H1 (cell line): ENCODE measurements at regions of chr4 and their contacts with region 1.

Region 1: DNA sequence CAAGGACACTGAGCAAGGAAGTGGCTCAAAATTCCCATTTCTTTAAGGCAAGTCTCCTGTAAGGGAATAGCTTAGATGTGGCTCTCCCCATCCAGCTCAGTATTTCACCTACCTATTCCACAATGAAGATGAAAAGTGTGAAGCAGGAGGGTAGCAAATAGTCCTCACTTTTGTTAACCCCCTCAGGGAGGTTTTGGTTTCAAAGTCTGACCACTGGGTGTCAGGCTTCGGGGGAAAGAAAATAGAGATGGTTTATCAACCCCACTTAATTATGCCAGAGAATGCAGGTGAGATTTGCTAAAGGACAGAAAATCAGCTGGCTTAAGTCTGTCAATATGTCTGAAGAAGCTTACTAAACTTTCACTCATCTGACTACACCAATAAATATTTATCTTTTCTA is 69.6 kb downstream of the DHX15 start:
- DNase-seq: no peak
- H3K4me3 ChIP-seq: no peak overlapping the region
- H3K27ac ChIP-seq: no peak overlapping the region
- H3K4me1 ChIP-seq: peaks cover 9 to 17% (median 14%) of the 10 kb centered on the region in 4 experiments; a peak in 6 of 7 replicates
- H3K27me3 ChIP-seq: no peaks in the 10 kb centered on the region
- CTCF ChIP-seq: peak in 2 of 3 experiments; percentile 40 to 48; a peak in 3 of 4 replicates
- EP300 ChIP-seq: no peak
- POLR2A ChIP-seq: no peak; a peak in 1 of 3 replicates
- RAD21 ChIP-seq: peak; percentile 34 to 40; a peak in 3 of 4 replicates

Region 2: GRCh38 chr4:24453951-24454350 is 60.9 kb before region 1 on chr4:
- CTCF ChIA-PET with region 1: no interaction called
- POLR2A ChIA-PET with region 1: no interaction called
- DNase-seq: no peak
- H3K4me3 ChIP-seq: no peak overlapping the region
- H3K27ac ChIP-seq: no peak overlapping the region
- H3K4me1 ChIP-seq: no peaks in the 10 kb centered on the region; a peak in 1 of 7 replicates
- H3K27me3 ChIP-seq: no peaks in the 10 kb centered on the region; a peak in 1 of 7 replicates
- CTCF ChIP-seq: no peak
- EP300 ChIP-seq: no peak
- POLR2A ChIP-seq: no peak
- RAD21 ChIP-seq: no peak

Region 3: GRCh38 chr4:24488399-24489164 is 26.2 kb before region 1 on chr4:
- CTCF ChIA-PET with region 1: interaction called, 35 read pairs
- POLR2A ChIA-PET with region 1: interaction called, 21 read pairs
- DNase-seq: peak in 1 of 2 experiments; percentile 98
- H3K4me3 ChIP-seq: no peak overlapping the region
- H3K27ac ChIP-seq: no peak overlapping the region
- H3K4me1 ChIP-seq: peaks cover 0 to 3% (median 0%) of the 10 kb centered on the region in 4 experiments; a peak in 3 of 7 replicates
- H3K27me3 ChIP-seq: peaks cover 0 to 1% (median 0%) of the 10 kb centered on the region in 4 experiments; a peak in 1 of 7 replicates
- CTCF ChIP-seq: peak; percentile 86 to 97 (median 96)
- EP300 ChIP-seq: no peak
- POLR2A ChIP-seq: no peak
- RAD21 ChIP-seq: peak; percentile 89 to 91

Region 4: GRCh38 chr4:24497221-24497620 is 17.6 kb before region 1 on chr4:
- CTCF ChIA-PET with region 1: interaction called, 5 read pairs
- POLR2A ChIA-PET with region 1: interaction called, 13 read pairs
- DNase-seq: no peak
- H3K4me3 ChIP-seq: no peak overlapping the region
- H3K27ac ChIP-seq: no peak overlapping the region
- H3K4me1 ChIP-seq: peaks cover 0 to 6% (median 2%) of the 10 kb centered on the region in 4 experiments; a peak in 4 of 7 replicates
- H3K27me3 ChIP-seq: no peaks in the 10 kb centered on the region
- CTCF ChIP-seq: no peak
- EP300 ChIP-seq: no peak
- POLR2A ChIP-seq: no peak
- RAD21 ChIP-seq: no peak

Region 5: DNA sequence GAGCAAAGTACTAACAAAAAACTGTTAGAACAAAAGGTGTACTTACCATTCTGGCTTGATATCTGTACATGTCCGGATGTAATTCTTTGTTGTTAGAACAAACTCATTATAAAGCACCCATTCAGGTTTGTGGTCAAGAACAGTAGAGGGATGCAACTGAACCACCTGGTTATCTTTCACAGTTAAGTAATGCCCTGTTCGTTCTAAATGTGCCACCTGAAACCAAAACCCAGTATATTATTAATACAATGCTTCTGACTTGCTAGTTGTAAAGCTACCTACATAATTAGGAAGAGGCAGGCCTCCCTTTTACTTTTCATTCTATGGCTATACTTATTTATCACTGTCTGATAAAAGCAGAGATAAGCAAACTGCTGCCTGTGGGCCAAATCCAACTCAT is 14.8 kb after region 1 on chr4:
- CTCF ChIA-PET with region 1: interaction called, 10 read pairs
- POLR2A ChIA-PET with region 1: interaction called, 73 read pairs
- DNase-seq: no peak
- H3K4me3 ChIP-seq: no peak overlapping the region
- H3K27ac ChIP-seq: no peak overlapping the region
- H3K4me1 ChIP-seq: no peaks in the 10 kb centered on the region
- H3K27me3 ChIP-seq: no peaks in the 10 kb centered on the region
- CTCF ChIP-seq: no peak
- EP300 ChIP-seq: no peak
- POLR2A ChIP-seq: no peak
- RAD21 ChIP-seq: no peak

Region 6: GRCh38 chr4:24668956-24669355 is 154.2 kb after region 1 on chr4:
- CTCF ChIA-PET with region 1: no interaction called
- POLR2A ChIA-PET with region 1: no interaction called
- DNase-seq: no peak
- H3K4me3 ChIP-seq: no peak overlapping the region
- H3K27ac ChIP-seq: no peak overlapping the region
- H3K4me1 ChIP-seq: peaks cover 0 to 2% (median 0%) of the 10 kb centered on the region in 4 experiments; a peak in 2 of 7 replicates
- H3K27me3 ChIP-seq: no peaks in the 10 kb centered on the region
- CTCF ChIP-seq: no peak
- EP300 ChIP-seq: no peak
- POLR2A ChIP-seq: no peak
- RAD21 ChIP-seq: no peak

Region 7: GRCh38 chr4:24783506-24783905 is 268.7 kb after region 1 on chr4:
- CTCF ChIA-PET with region 1: no interaction called
- POLR2A ChIA-PET with region 1: no interaction called
- DNase-seq: no peak
- H3K4me3 ChIP-seq: no peak overlapping the region
- H3K27ac ChIP-seq: no peak overlapping the region
- H3K4me1 ChIP-seq: peaks cover 0 to 3% (median 0%) of the 10 kb centered on the region in 4 experiments; a peak in 1 of 7 replicates
- H3K27me3 ChIP-seq: peaks cover 0 to 2% (median 0%) of the 10 kb centered on the region in 4 experiments; a peak in 1 of 7 replicates
- CTCF ChIP-seq: no peak
- EP300 ChIP-seq: no peak
- POLR2A ChIP-seq: no peak
- RAD21 ChIP-seq: no peak

Region 8: GRCh38 chr4:24949970-24950369 is 435.2 kb after region 1 on chr4:
- CTCF ChIA-PET with region 1: no interaction called
- POLR2A ChIA-PET with region 1: no interaction called
- DNase-seq: no peak
- H3K4me3 ChIP-seq: no peak overlapping the region
- H3K27ac ChIP-seq: no peak overlapping the region
- H3K4me1 ChIP-seq: no peaks in the 10 kb centered on the region
- H3K27me3 ChIP-seq: no peaks in the 10 kb centered on the region
- CTCF ChIP-seq: no peak
- EP300 ChIP-seq: no peak
- POLR2A ChIP-seq: no peak
- RAD21 ChIP-seq: no peak